Mammary epithelial cell (primary cell): ENCODE measurements at regions of chr1 and their contacts with region 1.

Region 1: GRCh38 chr1:95635811-95636210 is 401.8 kb downstream of the RWDD3 start:
- DNase-seq: no peak
- H3K4me3 ChIP-seq: no peak overlapping the region
- H3K27ac ChIP-seq: no peak overlapping the region
- H3K4me1 ChIP-seq: no peaks in the 10 kb centered on the region
- H3K27me3 ChIP-seq: no peaks in the 10 kb centered on the region
- CTCF ChIP-seq: no peak

Region 2: GRCh38 chr1:95197616-95198252 is 438.1 kb before region 1 on chr1:
- CTCF ChIA-PET with region 1: no interaction called
- dilution Hi-C with region 1: no loop called
- in situ Hi-C with region 1: no loop called
- intact Hi-C with region 1: no loop called
- DNase-seq: peak; percentile 78
- H3K4me3 ChIP-seq: no peak overlapping the region
- H3K27ac ChIP-seq: peak overlapping the region; percentile 24
- H3K4me1 ChIP-seq: peaks cover 11% of the 10 kb centered on the region
- H3K27me3 ChIP-seq: no peaks in the 10 kb centered on the region
- CTCF ChIP-seq: no peak

Region 3: GRCh38 chr1:95668165-95668564 is 32.4 kb after region 1 on chr1:
- CTCF ChIA-PET with region 1: no interaction called
- dilution Hi-C with region 1: loop called (anchors 5 kb)
- in situ Hi-C with region 1: no loop called
- intact Hi-C with region 1: no loop called
- DNase-seq: no peak
- H3K4me3 ChIP-seq: no peak overlapping the region
- H3K27ac ChIP-seq: no peak overlapping the region
- H3K4me1 ChIP-seq: no peaks in the 10 kb centered on the region
- H3K27me3 ChIP-seq: no peaks in the 10 kb centered on the region
- CTCF ChIP-seq: no peak

Region 4: DNA sequence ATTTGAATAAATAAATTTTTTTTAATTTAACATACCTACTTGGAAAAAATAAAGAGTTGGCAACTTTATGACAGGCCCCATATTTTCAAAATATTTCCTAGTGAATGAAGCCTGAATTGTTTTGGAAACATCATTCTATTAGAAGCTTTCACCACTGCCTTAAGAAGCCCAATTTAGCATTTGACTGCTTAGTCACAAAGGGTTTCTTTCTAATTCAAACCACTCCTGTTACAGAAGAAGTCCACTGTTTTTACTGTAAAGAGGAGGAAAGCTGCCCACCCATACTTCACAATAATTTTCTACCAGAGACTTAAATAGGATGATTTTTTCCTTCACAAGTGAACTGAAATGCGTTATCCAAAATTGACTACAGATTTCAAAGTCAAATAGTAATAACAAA is 551.2 kb after region 1 on chr1:
- CTCF ChIA-PET with region 1: no interaction called
- dilution Hi-C with region 1: no loop called
- in situ Hi-C with region 1: no loop called
- intact Hi-C with region 1: loop called (anchors 10 kb)
- DNase-seq: no peak
- H3K4me3 ChIP-seq: no peak overlapping the region
- H3K27ac ChIP-seq: no peak overlapping the region
- H3K4me1 ChIP-seq: no peaks in the 10 kb centered on the region
- H3K27me3 ChIP-seq: no peaks in the 10 kb centered on the region
- CTCF ChIP-seq: no peak